ENCODE measurements at regions of chr11 and their contacts with region 1.

Region 1: DNA sequence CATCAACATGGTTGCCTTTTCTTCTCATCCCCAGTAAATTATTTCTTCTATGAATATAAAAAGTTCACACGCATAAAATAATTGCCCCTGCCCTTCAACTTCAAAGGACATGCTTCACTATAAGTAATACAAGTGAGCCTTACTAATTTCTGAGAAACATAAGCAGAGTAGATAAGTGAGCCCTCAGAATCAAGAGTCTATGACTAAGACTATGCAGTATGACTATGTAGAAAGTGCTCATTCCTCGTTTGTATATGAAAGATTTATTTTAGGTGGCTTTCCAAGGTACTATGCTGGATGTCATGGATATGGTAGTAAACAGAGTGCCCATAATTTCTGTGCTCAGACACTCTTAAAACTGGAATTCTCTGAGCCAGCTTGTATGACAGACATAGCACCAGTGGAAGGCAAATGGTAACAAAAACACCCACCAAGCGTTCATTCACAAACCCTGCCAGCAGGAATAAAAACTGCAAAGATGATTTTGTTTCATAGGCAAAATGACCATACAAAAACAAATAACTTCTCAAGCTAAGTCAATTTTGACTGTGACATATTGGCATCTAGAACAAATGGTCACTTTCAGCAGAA is 189.8 kb downstream of the CADM1 start:
- DNase-seq: peak; percentile 21
- ATAC-seq: peak; percentile 67
- H3K4me3 ChIP-seq: no peak overlapping the region
- H3K27ac ChIP-seq: no peak overlapping the region
- H3K4me1 ChIP-seq: no peaks in the 10 kb centered on the region
- H3K27me3 ChIP-seq: no peaks in the 10 kb centered on the region
- CTCF ChIP-seq: no peak
- POLR2A ChIP-seq: no peak
- RAD21 ChIP-seq: no peak

Region 2: GRCh38 chr11:115194802-115195110 is 119.7 kb before region 1 on chr11:
- CTCF ChIA-PET with region 1: no interaction called
- POLR2A ChIA-PET with region 1: no interaction called
- dilution Hi-C with region 1: no loop called
- in situ Hi-C with region 1: no loop called
- intact Hi-C with region 1: loop called (anchors 5 kb)
- DNase-seq: peak; percentile 76
- ATAC-seq: peak; percentile 43; the same call in 1 of the 2 replicates
- H3K4me3 ChIP-seq: no peak overlapping the region
- H3K27ac ChIP-seq: no peak overlapping the region
- H3K4me1 ChIP-seq: peaks cover 9% of the 10 kb centered on the region
- H3K27me3 ChIP-seq: no peaks in the 10 kb centered on the region
- CTCF ChIP-seq: no peak
- POLR2A ChIP-seq: no peak
- RAD21 ChIP-seq: no peak

Region 3: GRCh38 chr11:115256397-115257197 is 57.8 kb before region 1 on chr11:
- CTCF ChIA-PET with region 1: no interaction called
- POLR2A ChIA-PET with region 1: no interaction called
- dilution Hi-C with region 1: no loop called
- in situ Hi-C with region 1: no loop called
- intact Hi-C with region 1: no loop called
- DNase-seq: no peak
- ATAC-seq: no peak
- H3K4me3 ChIP-seq: no peak overlapping the region
- H3K27ac ChIP-seq: no peak overlapping the region
- H3K4me1 ChIP-seq: no peaks in the 10 kb centered on the region
- H3K27me3 ChIP-seq: no peaks in the 10 kb centered on the region
- CTCF ChIP-seq: no peak
- POLR2A ChIP-seq: no peak
- RAD21 ChIP-seq: no peak

Region 4: GRCh38 chr11:115566180-115566764 is 251.8 kb after region 1 on chr11:
- CTCF ChIA-PET with region 1: no interaction called
- POLR2A ChIA-PET with region 1: no interaction called
- dilution Hi-C with region 1: no loop called
- in situ Hi-C with region 1: no loop called
- intact Hi-C with region 1: no loop called
- DNase-seq: no peak
- ATAC-seq: no peak
- H3K4me3 ChIP-seq: no peak overlapping the region
- H3K27ac ChIP-seq: no peak overlapping the region
- H3K4me1 ChIP-seq: no peaks in the 10 kb centered on the region
- H3K27me3 ChIP-seq: peaks cover 13% of the 10 kb centered on the region
- CTCF ChIP-seq: no peak
- POLR2A ChIP-seq: no peak
- RAD21 ChIP-seq: no peak